Panc1 (cell line): ENCODE measurements at regions of chr1 and their contacts with region 1.

Region 1: DNA sequence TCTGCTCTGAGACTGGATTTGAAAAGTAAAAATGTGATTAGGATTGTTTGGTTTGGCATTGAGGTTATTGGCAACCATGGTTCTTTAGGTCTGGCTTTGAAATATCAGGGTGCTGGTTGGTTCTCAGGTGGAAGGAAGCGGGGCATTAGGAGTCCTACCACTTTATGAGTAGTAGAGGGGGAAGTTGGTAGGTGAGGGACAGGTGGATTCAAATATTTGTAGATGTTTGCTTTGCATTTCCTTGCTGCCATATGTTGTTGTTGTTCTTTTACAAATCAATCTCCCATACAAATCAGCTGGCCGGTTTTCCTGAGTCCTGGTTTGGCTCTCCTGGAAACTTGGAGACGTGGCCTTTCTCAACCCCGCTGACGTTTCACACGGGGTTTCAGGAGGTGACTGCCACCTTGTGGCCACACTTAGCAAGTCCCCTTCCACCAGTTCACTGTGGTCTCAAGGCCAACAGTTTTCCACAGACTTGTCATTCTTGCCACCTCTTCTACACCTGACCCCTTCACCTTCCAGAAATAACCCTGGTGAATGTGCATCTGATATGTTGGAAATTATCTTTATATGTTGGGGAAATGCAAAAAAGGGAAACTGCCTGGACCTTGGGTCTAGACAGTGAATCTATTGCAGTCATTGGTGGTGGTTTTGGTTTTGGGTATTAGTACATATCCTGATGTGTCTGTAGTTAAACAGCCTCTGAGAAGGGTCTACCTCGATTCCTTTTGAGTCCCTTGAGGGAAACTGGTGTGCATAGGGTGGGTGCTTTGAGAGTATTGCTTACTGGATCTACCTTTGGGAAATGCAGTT is 127.0 kb upstream of the KIAA0040 start:
- DNase-seq: peak; percentile 39
- ATAC-seq: peak; percentile 93
- H3K4me3 ChIP-seq: no peak overlapping the region
- H3K27ac ChIP-seq: no peak overlapping the region
- H3K4me1 ChIP-seq: no peaks in the 10 kb centered on the region
- H3K27me3 ChIP-seq: no peaks in the 10 kb centered on the region
- CTCF ChIP-seq: peak; percentile 82

Region 2: GRCh38 chr1:175033953-175034352 is 285.7 kb before region 1 on chr1:
- CTCF ChIA-PET with region 1: no interaction called
- POLR2A ChIA-PET with region 1: no interaction called
- in situ Hi-C with region 1: no loop called
- intact Hi-C with region 1: loop called (anchors 1 kb)
- DNase-seq: no peak
- ATAC-seq: no peak
- H3K4me3 ChIP-seq: no peak overlapping the region
- H3K27ac ChIP-seq: no peak overlapping the region
- H3K4me1 ChIP-seq: 0 out of 2 replicates have a peak, but pooled peaks cover 3% of the 10 kb centered on the region
- H3K27me3 ChIP-seq: peaks cover 6% of the 10 kb centered on the region; the same call in 1 of the 2 replicates
- CTCF ChIP-seq: no peak

Region 3: GRCh38 chr1:175701590-175701989 is 382.0 kb after region 1 on chr1:
- CTCF ChIA-PET with region 1: no interaction called
- POLR2A ChIA-PET with region 1: no interaction called
- in situ Hi-C with region 1: no loop called
- intact Hi-C with region 1: no loop called
- DNase-seq: no peak
- ATAC-seq: no peak
- H3K4me3 ChIP-seq: no peak overlapping the region
- H3K27ac ChIP-seq: no peak overlapping the region
- H3K4me1 ChIP-seq: no peaks in the 10 kb centered on the region
- H3K27me3 ChIP-seq: peaks cover 4% of the 10 kb centered on the region; the same call in 1 of the 2 replicates
- CTCF ChIP-seq: no peak